ENCODE measurements at regions of chr11 and their contacts with region 1.

Region 1: DNA sequence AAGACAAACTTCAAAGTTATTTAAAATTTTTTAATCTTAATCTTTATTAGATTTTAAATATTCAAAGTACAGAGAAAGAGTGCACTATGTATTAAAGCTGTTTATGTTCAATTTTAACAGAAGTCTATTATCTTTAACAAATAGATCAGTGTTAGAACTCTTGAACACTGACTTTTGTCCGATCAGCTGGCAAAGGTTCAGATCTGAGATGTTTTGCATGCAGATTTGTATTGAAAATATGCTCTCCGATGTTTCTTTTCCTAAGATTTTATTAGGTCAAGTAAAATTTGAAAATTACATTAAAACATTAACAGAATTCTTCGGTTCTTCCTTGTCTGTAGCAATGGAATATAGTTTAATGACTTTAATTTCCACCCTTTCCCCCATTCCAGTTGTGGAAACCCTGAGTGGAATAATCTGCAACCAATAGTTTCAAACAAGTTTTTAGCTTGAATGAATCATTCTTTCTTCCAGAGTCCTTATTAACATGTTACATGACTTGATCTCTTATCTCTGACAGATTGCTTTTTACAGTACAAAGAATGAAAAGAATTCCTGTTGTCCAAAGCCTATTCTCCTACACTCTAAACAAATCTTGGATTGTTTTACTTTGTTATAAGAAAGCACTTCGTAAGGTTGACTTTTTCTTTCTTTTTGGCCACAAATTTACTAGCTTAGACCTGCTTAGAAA is 11.4 kb upstream of the TCP11L1 start:
- DNase-seq: no peak
- ATAC-seq: no peak
- H3K4me3 ChIP-seq: no peak overlapping the region
- H3K4me3 Mint-ChIP-seq: no peak overlapping the region
- H3K27ac ChIP-seq: no peak overlapping the region
- H3K27ac Mint-ChIP-seq: no peak overlapping the region
- H3K4me1 ChIP-seq: no peaks in the 10 kb centered on the region
- H3K4me1 Mint-ChIP-seq: no peaks in the 10 kb centered on the region
- H3K27me3 ChIP-seq: no peaks in the 10 kb centered on the region
- H3K27me3 Mint-ChIP-seq: no peaks in the 10 kb centered on the region
- CTCF ChIP-seq: no peak

Region 2: GRCh38 chr11:33052231-33052630 is 24.2 kb after region 1 on chr11:
- CTCF ChIA-PET with region 1: no interaction called
- POLR2A ChIA-PET with region 1: no interaction called
- intact Hi-C with region 1: loop called in 1 of 2 experiments (anchors 1 kb)
- DNase-seq: peak in 1 of 14 experiments; percentile 8
- ATAC-seq: no peak
- H3K4me3 ChIP-seq: no peak overlapping the region
- H3K4me3 Mint-ChIP-seq: no peak overlapping the region
- H3K27ac ChIP-seq: no peak overlapping the region
- H3K27ac Mint-ChIP-seq: no peak overlapping the region
- H3K4me1 ChIP-seq: no peaks in the 10 kb centered on the region
- H3K4me1 Mint-ChIP-seq: peaks cover 4% of the 10 kb centered on the region
- H3K27me3 ChIP-seq: no peaks in the 10 kb centered on the region
- H3K27me3 Mint-ChIP-seq: no peaks in the 10 kb centered on the region
- CTCF ChIP-seq: no peak

Measured in CD4-positive, alpha-beta T cell (primary cell).